ENCODE measurements at regions of chr6 and their contacts with region 1.

Region 1: DNA sequence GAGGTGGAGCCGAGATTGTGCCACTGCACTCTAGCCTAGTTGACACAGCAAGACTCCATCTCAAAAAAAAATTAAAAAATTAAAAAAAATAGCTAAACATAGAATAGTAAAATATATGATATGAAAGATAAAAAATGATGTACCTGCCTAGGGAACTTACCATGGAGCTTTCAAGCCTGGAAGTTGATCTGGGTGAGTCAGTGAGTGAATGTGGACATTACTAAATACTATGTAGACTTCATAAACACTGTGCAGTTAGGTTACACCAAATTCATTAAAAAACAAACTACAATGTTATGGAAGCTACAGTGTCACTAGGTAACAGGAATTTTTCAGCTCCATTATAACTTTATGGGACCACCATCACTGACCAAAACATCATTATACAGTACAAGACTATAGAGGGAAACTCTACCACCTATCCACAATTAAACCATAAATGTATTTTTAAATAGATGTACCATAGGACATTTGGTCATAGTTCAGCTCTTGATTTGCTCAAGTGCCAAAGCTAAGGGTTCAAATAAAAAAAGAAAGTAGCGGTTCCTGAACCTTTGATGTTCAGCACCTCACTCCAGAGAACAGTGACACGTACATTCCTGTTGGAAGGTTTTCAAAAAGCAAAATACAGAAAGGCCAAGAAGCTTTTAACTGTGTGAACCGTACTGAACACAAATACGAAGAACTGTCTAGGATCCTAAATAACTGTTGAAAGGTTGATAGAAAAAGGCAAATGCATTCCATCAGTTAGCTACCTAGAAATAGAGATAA is 52.4 kb upstream of the SPDEF start:
- DNase-seq: no peak
- H3K4me3 ChIP-seq: no peak overlapping the region
- H3K4me3 Mint-ChIP-seq: no peak overlapping the region
- H3K27ac ChIP-seq: no peak overlapping the region
- H3K27ac Mint-ChIP-seq: no peak overlapping the region
- H3K4me1 ChIP-seq: no peaks in the 10 kb centered on the region
- H3K4me1 Mint-ChIP-seq: peaks cover 3% of the 10 kb centered on the region
- H3K27me3 ChIP-seq: no peaks in the 10 kb centered on the region
- H3K27me3 Mint-ChIP-seq: no peaks in the 10 kb centered on the region
- CTCF ChIP-seq: no peak

Region 2: DNA sequence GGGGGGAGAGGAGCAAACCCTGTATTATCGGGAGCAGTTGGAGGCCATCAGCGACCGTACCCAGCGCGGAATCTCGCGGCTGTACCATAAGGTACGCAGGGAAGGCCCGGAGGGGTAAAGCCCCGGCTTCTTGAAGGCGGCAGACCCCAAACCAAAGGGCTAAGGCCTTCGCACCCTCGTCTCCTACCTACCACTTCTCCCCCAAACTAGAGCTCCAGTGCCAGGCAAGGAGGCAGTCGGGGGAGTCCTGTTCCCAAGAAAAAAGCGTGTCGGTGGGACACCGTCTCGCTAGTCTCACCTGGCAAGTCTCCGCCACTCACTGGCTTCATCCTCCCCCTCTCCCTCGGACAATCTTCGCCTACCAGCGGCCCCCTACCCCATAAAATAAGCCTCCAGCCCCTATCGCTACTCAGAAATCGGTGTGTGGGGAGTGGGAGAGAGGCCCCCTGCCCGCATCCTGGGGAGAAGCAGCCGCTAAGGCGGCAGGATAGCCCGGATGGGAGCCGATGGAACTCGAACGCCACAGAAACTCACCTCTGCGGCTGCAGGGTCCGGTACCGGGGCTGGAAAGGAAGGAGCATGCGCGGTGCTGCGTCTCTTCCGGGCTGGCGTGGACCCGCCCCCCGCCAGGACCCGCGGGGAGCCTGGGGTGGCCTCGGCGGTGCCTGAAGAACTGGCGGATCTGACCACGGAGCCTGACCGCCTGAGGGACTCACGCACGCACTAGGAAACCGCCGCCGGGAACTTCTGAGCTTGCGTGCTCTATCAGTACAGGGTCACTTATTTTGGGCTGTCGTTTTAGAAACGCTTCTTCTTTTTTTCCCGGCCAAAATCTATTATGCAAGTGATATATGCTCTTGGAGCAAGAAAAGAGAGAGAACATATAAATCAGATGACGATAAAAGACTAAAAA is 182.8 kb before region 1 on chr6 and contains the start of gene RPS10:
- intact Hi-C with region 1: no loop called
- DNase-seq: peak; percentile 93 to 98 (median 96)
- H3K4me3 ChIP-seq: peak within 1 kb of the TSS; percentile 72 to 83 (median 83)
- H3K4me3 Mint-ChIP-seq: peak within 1 kb of the TSS; percentile 93
- H3K27ac ChIP-seq: peak within 1 kb of the TSS; percentile 78 to 87
- H3K27ac Mint-ChIP-seq: peak within 1 kb of the TSS; percentile 95 to 97 (median 97)
- H3K4me1 ChIP-seq: peaks cover 12% of the 10 kb centered on the region in 2 donors
- H3K4me1 Mint-ChIP-seq: peaks cover 15% of the 10 kb centered on the region
- H3K27me3 ChIP-seq: no peaks in the 10 kb centered on the region
- H3K27me3 Mint-ChIP-seq: peaks cover 0 to 5% (median 5%) of the 10 kb centered on the region in 3 donors
- CTCF ChIP-seq: no peak
- polyA plus RNA-seq, gene RPS10: 645 to 2,603 (median 1,054) TPM

Region 3: DNA sequence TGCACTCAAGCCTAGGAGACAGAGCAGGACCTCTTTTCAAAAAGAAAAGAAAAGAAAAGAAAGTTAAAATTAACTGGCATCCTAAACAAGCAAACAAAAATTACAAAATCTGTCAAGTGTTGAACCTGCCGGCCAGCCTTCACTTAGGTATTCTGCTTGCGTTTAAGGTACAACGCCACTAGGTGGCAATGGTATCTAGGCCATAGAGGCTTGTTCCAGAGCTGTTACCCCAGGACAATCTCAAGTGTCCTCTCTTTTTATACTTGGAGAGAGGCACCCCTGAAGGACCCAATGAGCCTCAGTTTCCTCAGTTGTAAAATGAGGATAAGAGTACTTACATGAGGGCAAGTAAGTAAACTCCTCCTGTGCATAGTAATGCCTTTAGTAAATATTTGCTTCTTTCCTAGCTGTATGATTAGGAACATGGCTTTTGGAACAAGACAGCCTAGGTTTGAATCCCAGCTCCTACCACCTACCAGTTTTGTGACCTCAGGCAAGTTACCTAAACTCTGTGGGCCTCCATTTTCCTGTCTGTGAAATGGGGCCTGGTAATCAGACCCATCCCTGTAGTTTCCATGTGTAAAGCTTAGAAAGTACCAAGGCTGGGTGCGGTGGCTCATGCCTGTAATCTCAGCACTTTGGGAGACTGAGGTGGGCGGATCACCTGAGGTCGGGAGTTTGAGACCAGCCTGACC is 148.5 kb before region 1 on chr6:
- intact Hi-C with region 1: loop called (anchors 5 kb)
- DNase-seq: peak; percentile 32 to 54 (median 52)
- H3K4me3 ChIP-seq: no peak overlapping the region
- H3K4me3 Mint-ChIP-seq: no peak overlapping the region
- H3K27ac ChIP-seq: no peak overlapping the region
- H3K27ac Mint-ChIP-seq: no peak overlapping the region
- H3K4me1 ChIP-seq: no peaks in the 10 kb centered on the region
- H3K4me1 Mint-ChIP-seq: peaks cover 3% of the 10 kb centered on the region
- H3K27me3 ChIP-seq: peaks cover 0 to 19% of the 10 kb centered on the region in 2 donors
- H3K27me3 Mint-ChIP-seq: peaks cover 18 to 29% (median 21%) of the 10 kb centered on the region in 3 donors
- CTCF ChIP-seq: peak; percentile 81

Region 4: DNA sequence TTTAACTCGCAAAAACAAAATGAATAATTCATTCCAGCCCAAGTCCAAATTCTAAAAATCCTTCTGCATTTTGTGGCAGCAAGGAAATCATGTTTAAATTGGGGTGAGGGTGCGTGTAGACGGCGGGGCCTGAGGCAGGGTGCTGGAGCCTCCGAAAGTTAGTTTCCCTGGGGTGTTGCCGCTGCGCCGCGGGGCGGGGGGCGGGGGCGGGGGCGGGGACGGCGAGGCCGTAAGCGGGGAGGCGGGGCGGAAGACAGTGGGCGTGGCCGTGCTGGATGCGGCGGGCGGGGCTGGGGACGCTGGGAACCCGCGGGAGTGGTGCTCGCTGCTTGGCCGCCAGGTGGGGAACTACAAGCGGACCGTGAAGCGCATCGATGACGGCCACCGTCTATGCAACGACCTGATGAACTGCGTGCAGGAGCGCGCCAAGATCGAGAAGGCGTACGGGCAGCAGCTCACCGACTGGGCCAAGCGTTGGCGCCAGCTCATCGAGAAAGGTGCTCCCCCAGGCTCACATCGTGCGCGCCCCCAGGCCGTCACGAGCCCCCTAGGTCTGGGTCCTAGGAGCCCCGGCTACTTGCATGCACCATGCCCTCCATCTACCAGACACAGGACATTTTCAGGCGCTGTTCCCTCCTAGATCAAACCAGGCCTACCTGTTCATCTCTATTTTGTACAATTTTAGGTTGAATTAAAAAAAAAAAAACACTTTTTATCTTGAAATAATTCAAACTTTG is 81.3 kb before region 1 on chr6:
- intact Hi-C with region 1: loop called (anchors 2 to 5 kb)
- DNase-seq: peak; percentile 87 to 91 (median 91)
- H3K4me3 ChIP-seq: peak overlapping the region in 2 of 3 experiments; percentile 15 to 51
- H3K4me3 Mint-ChIP-seq: peak overlapping the region; percentile 48 to 52
- H3K27ac ChIP-seq: no peak overlapping the region
- H3K27ac Mint-ChIP-seq: peak overlapping the region in 2 of 7 donors; percentile 13 to 42
- H3K4me1 ChIP-seq: peaks cover 7 to 8% of the 10 kb centered on the region in 2 donors
- H3K4me1 Mint-ChIP-seq: peaks cover 6% of the 10 kb centered on the region
- H3K27me3 ChIP-seq: no peaks in the 10 kb centered on the region
- H3K27me3 Mint-ChIP-seq: peaks cover 7 to 10% (median 8%) of the 10 kb centered on the region in 3 donors
- CTCF ChIP-seq: peak; percentile 76

Region 5: GRCh38 chr6:34575326-34575725 is 33.2 kb before region 1 on chr6:
- intact Hi-C with region 1: no loop called
- DNase-seq: no peak
- H3K4me3 ChIP-seq: no peak overlapping the region
- H3K4me3 Mint-ChIP-seq: no peak overlapping the region
- H3K27ac ChIP-seq: no peak overlapping the region
- H3K27ac Mint-ChIP-seq: no peak overlapping the region
- H3K4me1 ChIP-seq: no peaks in the 10 kb centered on the region
- H3K4me1 Mint-ChIP-seq: peaks cover 9% of the 10 kb centered on the region
- H3K27me3 ChIP-seq: no peaks in the 10 kb centered on the region
- H3K27me3 Mint-ChIP-seq: peaks cover 4 to 6% (median 5%) of the 10 kb centered on the region in 3 donors
- CTCF ChIP-seq: no peak